HEK293 (cell line): ENCODE measurements at regions of chr14 and their contacts with region 1.

Region 1: DNA sequence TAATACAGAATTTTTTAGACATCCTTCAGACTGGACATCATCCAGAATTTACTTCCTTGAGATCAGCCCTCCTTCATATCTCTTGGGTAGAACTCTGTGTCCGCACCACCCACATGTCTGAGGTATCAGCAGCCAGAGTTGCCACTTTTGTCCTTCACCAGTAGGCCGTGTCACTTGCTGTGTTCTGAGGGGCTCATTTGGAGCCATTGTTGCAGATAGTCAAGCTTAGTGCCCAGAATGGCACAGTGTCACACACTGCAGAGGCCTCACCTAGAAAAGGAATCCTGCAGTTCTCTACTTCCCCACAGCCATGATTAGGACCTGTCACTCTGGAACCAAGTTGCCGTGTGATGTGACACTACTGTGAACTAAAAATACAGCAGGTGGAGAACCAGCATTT is 36.9 kb upstream of the KCNK13 start:
- H3K4me3 ChIP-seq: no peak overlapping the region
- H3K27ac ChIP-seq: no peak overlapping the region
- H3K4me1 ChIP-seq: no peaks in the 10 kb centered on the region
- CTCF ChIP-seq: no peak

Region 2: GRCh38 chr14:90005939-90006530 is 18.9 kb before region 1 on chr14:
- CTCF ChIA-PET with region 1: no interaction called
- POLR2A ChIA-PET with region 1: no interaction called
- H3K4me3 ChIP-seq: no peak overlapping the region
- H3K27ac ChIP-seq: no peak overlapping the region
- H3K4me1 ChIP-seq: no peaks in the 10 kb centered on the region
- CTCF ChIP-seq: no peak

Region 3: GRCh38 chr14:90235179-90235976 is 210.5 kb after region 1 on chr14:
- CTCF ChIA-PET with region 1: interaction called, 10 read pairs
- POLR2A ChIA-PET with region 1: no interaction called
- H3K4me3 ChIP-seq: no peak overlapping the region
- H3K27ac ChIP-seq: no peak overlapping the region
- H3K4me1 ChIP-seq: no peaks in the 10 kb centered on the region
- CTCF ChIP-seq: peak; percentile 79